ENCODE measurements at regions of chr1 and their contacts with region 1.

Region 1: DNA sequence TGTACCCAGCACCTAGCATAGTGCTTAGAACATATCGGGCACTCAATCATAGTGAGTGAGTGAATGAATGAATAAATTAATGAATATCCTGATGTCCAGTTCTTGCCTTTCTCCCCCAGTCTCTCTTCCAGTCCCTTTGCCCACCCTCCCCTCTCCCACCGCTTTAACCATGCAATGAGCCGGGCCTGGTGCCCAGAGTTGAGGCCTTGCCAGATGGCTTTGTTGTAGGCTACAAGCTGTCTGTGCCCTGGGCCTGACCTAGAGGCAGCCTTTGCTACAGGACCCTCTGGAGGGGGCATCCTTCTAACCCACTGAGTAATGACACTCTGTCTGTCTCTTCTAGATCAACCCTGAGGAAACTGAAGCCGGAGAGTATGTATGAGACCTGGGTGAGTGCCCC is 6.9 kb downstream of the CASQ1 start:
- DNase-seq: no peak
- H3K4me3 ChIP-seq: no peak overlapping the region
- H3K27ac ChIP-seq: no peak overlapping the region
- H3K4me1 ChIP-seq: peaks cover 0 to 12% (median 7%) of the 10 kb centered on the region in 3 donors
- H3K27me3 ChIP-seq: no peaks in the 10 kb centered on the region
- CTCF ChIP-seq: no peak
- POLR2A ChIP-seq: no peak

Region 2: DNA sequence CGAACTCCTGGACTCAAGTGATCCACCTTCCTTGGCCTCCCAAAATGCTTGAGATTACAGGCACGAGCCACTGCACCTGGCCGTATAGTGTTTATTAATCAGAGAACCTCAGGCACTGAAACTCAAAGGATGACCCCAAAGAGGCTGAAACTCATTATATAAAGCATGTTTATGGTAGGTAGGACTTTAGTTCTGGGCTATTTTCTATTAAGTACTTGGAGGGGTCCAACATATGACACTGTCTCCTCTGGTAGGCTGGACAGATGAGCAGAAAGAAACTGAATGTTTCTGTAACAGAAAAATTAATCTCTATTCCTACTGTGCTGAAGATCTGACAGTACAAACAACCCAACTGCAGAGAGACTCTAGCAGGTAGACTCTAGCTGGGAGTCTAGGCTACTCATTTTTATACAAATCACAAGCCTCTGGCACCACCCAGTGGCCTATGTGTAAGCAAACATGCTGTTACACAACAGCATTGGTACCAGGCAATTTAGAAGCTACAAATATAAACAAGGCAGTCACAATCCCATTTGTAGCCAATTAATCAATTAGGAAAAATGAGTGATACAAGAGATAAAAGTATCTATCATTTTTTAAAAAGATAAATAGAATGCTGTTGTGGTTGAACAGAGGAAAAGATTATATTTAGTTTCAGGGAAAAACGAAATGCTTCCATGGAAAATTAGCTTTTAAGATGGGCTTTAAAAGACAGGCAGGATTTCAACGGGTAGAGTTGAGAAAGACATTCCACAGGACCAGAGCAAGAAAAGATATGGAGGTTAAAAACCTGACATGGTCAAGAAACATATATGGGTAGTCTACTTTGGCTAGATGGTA is 54.7 kb after region 1 on chr1:
- intact Hi-C with region 1: loop called (anchors 5 kb)
- DNase-seq: no peak
- H3K4me3 ChIP-seq: no peak overlapping the region
- H3K27ac ChIP-seq: peak overlapping the region in 1 of 4 donors; percentile 20
- H3K4me1 ChIP-seq: peaks cover 0 to 20% (median 4%) of the 10 kb centered on the region in 3 donors
- H3K27me3 ChIP-seq: no peaks in the 10 kb centered on the region
- CTCF ChIP-seq: peak; percentile 29 to 80 (median 69)
- POLR2A ChIP-seq: no peak

Region 3: DNA sequence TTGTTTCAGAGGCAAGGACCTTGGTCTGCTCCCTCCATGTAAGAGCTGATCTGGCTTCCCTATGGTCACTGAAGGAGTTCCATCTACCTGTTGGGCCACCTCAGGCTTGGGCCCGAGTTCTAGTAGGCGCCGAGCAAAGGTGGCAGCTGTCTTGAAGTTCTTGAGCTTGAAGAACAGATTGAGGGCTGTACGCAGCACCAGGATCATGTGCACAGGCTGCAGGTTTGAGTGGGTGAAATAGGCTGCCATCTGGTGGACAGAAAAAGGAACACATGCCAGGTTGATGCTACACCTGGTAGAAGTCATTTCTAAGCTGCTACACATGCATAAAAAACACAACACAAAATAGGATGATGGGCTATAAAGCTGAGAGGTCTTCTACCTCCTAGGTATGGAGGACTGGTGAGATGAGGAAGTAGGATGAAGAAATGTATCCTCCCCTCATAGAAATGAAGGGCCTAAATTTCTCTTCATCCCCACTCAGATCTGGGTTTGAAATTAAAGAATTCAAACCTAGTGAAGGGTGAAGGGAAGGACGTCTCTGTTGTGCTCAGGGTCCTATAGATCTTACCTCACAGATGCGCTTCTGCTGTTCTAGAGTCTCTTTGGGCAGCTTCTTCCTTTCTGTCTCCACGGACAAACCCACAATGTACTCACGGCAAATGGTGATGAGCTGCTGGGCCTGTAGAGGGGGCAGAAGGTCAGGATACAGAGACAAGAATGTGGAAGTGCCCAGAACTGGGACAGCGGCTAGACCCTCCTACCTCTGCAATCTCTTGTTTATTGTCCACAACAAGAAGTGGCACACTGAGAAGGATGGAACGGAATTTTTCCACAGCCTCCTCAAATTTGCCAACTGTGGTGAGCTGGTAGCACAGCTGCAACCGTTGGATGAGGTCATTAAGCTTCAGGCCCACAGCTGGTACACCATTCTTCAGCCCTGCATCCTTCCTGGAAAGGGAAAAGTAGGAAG is 94.3 kb after region 1 on chr1:
- intact Hi-C with region 1: loop called (anchors 5 kb)
- DNase-seq: no peak
- H3K4me3 ChIP-seq: no peak overlapping the region
- H3K27ac ChIP-seq: no peak overlapping the region
- H3K4me1 ChIP-seq: peaks cover 0 to 13% (median 3%) of the 10 kb centered on the region in 3 donors
- H3K27me3 ChIP-seq: no peaks in the 10 kb centered on the region
- CTCF ChIP-seq: peak; percentile 76 to 85 (median 82)
- POLR2A ChIP-seq: no peak

Measured in esophagus squamous epithelium (tissue), 5 donors.